Caco-2 (cell line): ENCODE measurements at regions of chr2 and their contacts with region 1.

Region 1: GRCh38 chr2:127134833-127135830 is 28.2 kb upstream of the BIN1 start:
- DNase-seq: no peak
- H3K4me3 ChIP-seq: no peak overlapping the region
- H3K4me3 Mint-ChIP-seq: no peak overlapping the region
- H3K27ac Mint-ChIP-seq: peak overlapping the region; percentile 43
- H3K4me1 ChIP-seq: peaks cover 23% of the 10 kb centered on the region
- H3K4me1 Mint-ChIP-seq: peaks cover 18% of the 10 kb centered on the region
- H3K27me3 ChIP-seq: no peaks in the 10 kb centered on the region
- H3K27me3 Mint-ChIP-seq: no peaks in the 10 kb centered on the region
- CTCF ChIP-seq: no peak

Region 2: DNA sequence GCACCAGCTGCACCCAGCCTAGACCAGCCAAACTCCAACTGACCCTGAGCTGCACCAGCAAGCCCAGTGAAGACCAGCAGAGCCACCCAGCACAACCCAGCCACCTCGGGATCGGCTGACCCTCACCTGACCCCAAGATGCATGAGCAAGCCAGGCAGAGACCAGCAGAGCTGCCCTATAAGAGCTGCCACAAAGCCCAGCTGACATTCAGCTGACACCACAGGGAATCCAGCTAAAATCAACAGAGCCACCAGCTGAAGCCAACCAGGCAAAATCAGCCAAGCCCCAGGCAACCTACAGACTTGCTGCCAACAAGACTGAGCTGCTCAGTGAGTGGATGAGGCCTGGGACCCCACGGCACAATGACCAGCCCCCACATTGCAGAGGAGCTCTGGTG is 30.4 kb after region 1 on chr2:
- CTCF ChIA-PET with region 1: interaction called, 11 read pairs
- POLR2A ChIA-PET with region 1: no interaction called
- intact Hi-C with region 1: loop called (anchors 2 kb)
- DNase-seq: no peak
- H3K4me3 ChIP-seq: no peak overlapping the region
- H3K4me3 Mint-ChIP-seq: no peak overlapping the region
- H3K27ac Mint-ChIP-seq: no peak overlapping the region
- H3K4me1 ChIP-seq: peaks cover 83% of the 10 kb centered on the region
- H3K4me1 Mint-ChIP-seq: peaks cover 52% of the 10 kb centered on the region
- H3K27me3 ChIP-seq: no peaks in the 10 kb centered on the region
- H3K27me3 Mint-ChIP-seq: no peaks in the 10 kb centered on the region
- CTCF ChIP-seq: no peak

Region 3: GRCh38 chr2:127174136-127174535 is 39.0 kb after region 1 on chr2:
- CTCF ChIA-PET with region 1: no interaction called
- POLR2A ChIA-PET with region 1: no interaction called
- intact Hi-C with region 1: loop called (anchors 2 kb)
- DNase-seq: peak; percentile 64 to 68
- H3K4me3 ChIP-seq: no peak overlapping the region
- H3K4me3 Mint-ChIP-seq: no peak overlapping the region
- H3K27ac Mint-ChIP-seq: no peak overlapping the region
- H3K4me1 ChIP-seq: peaks cover 20% of the 10 kb centered on the region
- H3K4me1 Mint-ChIP-seq: peaks cover 25% of the 10 kb centered on the region
- H3K27me3 ChIP-seq: no peaks in the 10 kb centered on the region
- H3K27me3 Mint-ChIP-seq: no peaks in the 10 kb centered on the region
- CTCF ChIP-seq: peak; percentile 60 to 64

Region 4: GRCh38 chr2:127324635-127325034 is 189.5 kb after region 1 on chr2:
- CTCF ChIA-PET with region 1: no interaction called
- POLR2A ChIA-PET with region 1: no interaction called
- intact Hi-C with region 1: no loop called
- DNase-seq: peak in 1 of 2 experiments; percentile 48
- H3K4me3 ChIP-seq: no peak overlapping the region
- H3K4me3 Mint-ChIP-seq: no peak overlapping the region
- H3K27ac Mint-ChIP-seq: no peak overlapping the region
- H3K4me1 ChIP-seq: no peaks in the 10 kb centered on the region
- H3K4me1 Mint-ChIP-seq: no peaks in the 10 kb centered on the region
- H3K27me3 ChIP-seq: no peaks in the 10 kb centered on the region
- H3K27me3 Mint-ChIP-seq: no peaks in the 10 kb centered on the region
- CTCF ChIP-seq: peak; percentile 67 to 79